ENCODE measurements at regions of chr3 and their contacts with region 1.

Region 1: GRCh38 chr3:70684701-70685100 is 372.3 kb upstream of the MDFIC2 start:
- DNase-seq: no peak
- ATAC-seq: no peak

Region 2: DNA sequence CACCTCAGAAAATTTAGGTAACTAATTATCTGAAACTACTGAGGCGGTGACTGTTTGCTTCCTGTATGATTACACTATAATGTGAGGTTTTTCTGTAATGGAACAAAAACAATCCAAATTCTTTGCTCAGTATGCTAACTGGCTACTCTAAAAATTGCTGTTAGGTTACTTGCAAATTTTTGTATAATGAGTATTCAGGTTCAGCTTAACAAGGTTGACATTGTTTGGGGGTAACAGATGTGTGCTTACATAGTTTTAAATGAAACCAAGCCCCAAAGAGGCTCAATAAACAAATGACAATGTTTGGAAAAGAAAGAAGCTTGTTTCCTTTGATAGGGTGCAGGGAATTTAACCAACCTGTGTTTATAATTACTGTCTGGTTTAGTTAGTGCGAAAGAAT is 42.3 kb after region 1 on chr3:
- intact Hi-C with region 1: loop called (anchors 2 kb)
- DNase-seq: no peak
- ATAC-seq: no peak

Region 3: GRCh38 chr3:72634128-72634527 is 1949.4 kb after region 1 on chr3:
- intact Hi-C with region 1: loop called (anchors 10 kb)
- DNase-seq: no peak
- ATAC-seq: no peak